ENCODE measurements at regions of chr1 and their contacts with region 1.

Region 1: GRCh38 chr1:162023547-162024501 is at the start of gene OLFML2B:
- DNase-seq: peak; percentile 65
- H3K4me3 Mint-ChIP-seq: peak within 1 kb of the TSS; percentile 86
- H3K27ac Mint-ChIP-seq: no peak within 1 kb of the TSS
- H3K4me1 Mint-ChIP-seq: peaks cover 7% of the 10 kb centered on the region
- H3K27me3 Mint-ChIP-seq: peaks cover 18% of the 10 kb centered on the region
- total RNA-seq, gene OLFML2B: 1.7 to 2.3 TPM

Region 2: GRCh38 chr1:161905269-161905884 is 118.4 kb before region 1 on chr1:
- CTCF ChIA-PET with region 1: interaction called, 17 read pairs
- intact Hi-C with region 1: loop called (anchors 1 kb)
- DNase-seq: peak; percentile 60
- H3K4me3 Mint-ChIP-seq: no peak overlapping the region
- H3K27ac Mint-ChIP-seq: no peak overlapping the region
- H3K4me1 Mint-ChIP-seq: peaks cover 41% of the 10 kb centered on the region
- H3K27me3 Mint-ChIP-seq: no peaks in the 10 kb centered on the region

Region 3: DNA sequence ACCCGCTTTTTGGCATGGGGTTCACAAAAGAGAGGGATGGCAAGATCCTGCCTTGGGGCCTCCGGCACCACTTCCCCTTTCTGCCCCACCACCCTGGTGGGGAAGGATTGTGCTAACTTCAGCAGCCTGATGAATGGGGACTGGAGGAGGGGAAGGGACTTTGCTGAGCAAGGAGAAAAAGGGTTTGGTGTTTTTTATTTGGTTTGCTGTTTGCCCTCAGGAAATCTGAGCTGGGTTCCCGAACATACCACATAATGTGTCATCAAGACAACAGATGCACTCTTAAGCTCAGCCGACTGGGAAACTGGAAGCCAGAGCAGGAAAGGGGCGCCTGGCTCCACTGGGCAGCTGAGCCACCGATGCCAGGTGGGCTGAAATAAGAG is 20.0 kb before region 1 on chr1:
- CTCF ChIA-PET with region 1: no interaction called
- intact Hi-C with region 1: no loop called
- DNase-seq: no peak
- H3K4me3 Mint-ChIP-seq: no peak overlapping the region
- H3K27ac Mint-ChIP-seq: no peak overlapping the region
- H3K4me1 Mint-ChIP-seq: peaks cover 9% of the 10 kb centered on the region
- H3K27me3 Mint-ChIP-seq: no peaks in the 10 kb centered on the region

Region 4: DNA sequence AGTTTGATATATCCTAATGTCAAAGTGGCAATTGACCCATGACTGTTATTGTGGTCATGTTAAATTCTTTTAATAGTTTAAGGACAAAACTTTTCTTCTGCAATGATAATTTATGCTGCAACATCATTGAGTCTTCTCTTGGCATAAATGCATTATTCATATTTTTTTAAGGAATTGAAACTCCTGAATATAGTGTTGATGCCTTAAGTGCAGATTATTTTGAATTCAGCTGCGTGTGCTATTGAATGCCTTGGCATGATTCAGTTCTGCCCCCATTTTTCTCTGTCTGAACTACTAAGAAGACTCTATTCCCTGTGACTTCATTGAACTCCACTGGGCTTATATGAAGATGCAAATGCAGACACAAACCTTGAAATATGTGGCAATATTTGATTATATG is 23.1 kb after region 1 on chr1:
- CTCF ChIA-PET with region 1: no interaction called
- intact Hi-C with region 1: no loop called
- DNase-seq: no peak
- H3K4me3 Mint-ChIP-seq: no peak overlapping the region
- H3K27ac Mint-ChIP-seq: no peak overlapping the region
- H3K4me1 Mint-ChIP-seq: no peaks in the 10 kb centered on the region
- H3K27me3 Mint-ChIP-seq: peaks cover 2% of the 10 kb centered on the region

Region 5: GRCh38 chr1:162069328-162070093 is 45.7 kb after region 1 on chr1 and contains the start of gene NOS1AP:
- CTCF ChIA-PET with region 1: no interaction called
- intact Hi-C with region 1: no loop called
- DNase-seq: peak; percentile 84
- H3K4me3 Mint-ChIP-seq: peak within 1 kb of the TSS; percentile 78
- H3K27ac Mint-ChIP-seq: no peak within 1 kb of the TSS
- H3K4me1 Mint-ChIP-seq: peaks cover 1% of the 10 kb centered on the region
- H3K27me3 Mint-ChIP-seq: peaks cover 50% of the 10 kb centered on the region
- total RNA-seq, gene NOS1AP: 0.33 to 0.42 TPM

Region 6: DNA sequence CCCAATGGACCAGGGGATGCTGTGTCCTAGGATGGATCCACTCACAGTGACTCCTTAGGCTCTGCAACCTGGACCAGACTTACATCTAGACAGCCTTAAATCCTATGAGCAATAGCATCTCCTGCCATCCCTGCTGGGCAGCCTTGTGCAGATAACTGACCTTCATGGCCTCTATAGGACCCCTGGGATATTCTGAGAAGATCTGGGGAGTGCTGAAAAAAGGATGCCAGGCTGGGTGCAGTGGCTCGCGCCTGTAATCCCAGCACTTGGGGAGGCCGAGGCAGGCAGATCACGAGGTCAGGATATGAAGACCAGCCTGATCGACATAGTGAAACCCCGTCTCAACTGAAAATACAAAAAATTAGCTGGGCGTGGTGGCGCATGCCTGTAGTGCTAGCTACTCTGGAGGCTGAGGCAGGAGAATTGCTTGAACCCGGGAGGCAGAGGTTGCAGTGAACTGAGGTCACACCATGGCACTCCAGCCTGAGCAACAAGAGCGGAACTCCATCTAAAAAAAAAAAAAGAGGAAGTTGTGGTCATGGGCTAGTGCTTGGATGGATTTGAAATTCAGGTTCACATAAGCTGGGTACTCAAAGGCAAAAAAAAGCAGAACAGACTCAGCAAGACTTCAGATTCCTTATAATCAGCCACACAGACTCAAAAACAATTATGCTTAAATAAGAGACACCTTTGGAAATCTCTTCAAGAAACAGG is 399.0 kb after region 1 on chr1:
- CTCF ChIA-PET with region 1: no interaction called
- intact Hi-C with region 1: no loop called
- DNase-seq: no peak
- H3K4me3 Mint-ChIP-seq: no peak overlapping the region
- H3K27ac Mint-ChIP-seq: no peak overlapping the region
- H3K4me1 Mint-ChIP-seq: no peaks in the 10 kb centered on the region
- H3K27me3 Mint-ChIP-seq: peaks cover 24% of the 10 kb centered on the region